HCT116 (cell line): ENCODE measurements at regions of chr10 and their contacts with region 1.

Region 1: DNA sequence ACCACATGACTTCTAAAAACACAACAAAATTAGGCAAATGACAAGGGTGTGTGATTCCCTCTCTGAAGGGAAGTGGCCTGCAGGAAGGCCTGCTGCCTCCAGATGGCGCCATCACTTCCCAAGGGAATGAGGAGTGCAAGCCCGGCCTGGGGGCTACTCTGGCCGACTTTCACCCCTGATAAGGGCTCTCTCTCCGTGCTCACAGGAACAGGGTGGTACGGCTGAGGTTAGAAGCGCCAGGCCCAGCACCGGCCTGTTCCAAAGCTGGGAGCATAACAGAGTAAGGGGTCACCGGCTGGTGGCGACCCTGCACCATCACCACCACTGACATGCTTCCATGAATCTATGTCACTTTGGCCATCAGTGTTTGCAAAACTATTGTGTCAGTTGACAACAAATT is 13.1 kb downstream of the RBP3 start:
- DNase-seq: peak; percentile 36
- ATAC-seq: peak; percentile 91
- H3K4me3 ChIP-seq: no peak overlapping the region
- H3K27ac ChIP-seq: no peak overlapping the region
- H3K4me1 ChIP-seq: peaks cover 0 to 18% of the 10 kb centered on the region in 2 experiments; a peak in 1 of 4 replicates
- H3K27me3 ChIP-seq: no peaks in the 10 kb centered on the region
- CTCF ChIP-seq: peak; percentile 76 to 99 (median 98); a peak in 5 of 6 replicates
- POLR2A ChIP-seq: no peak
- RAD21 ChIP-seq: peak; percentile 81

Region 2: DNA sequence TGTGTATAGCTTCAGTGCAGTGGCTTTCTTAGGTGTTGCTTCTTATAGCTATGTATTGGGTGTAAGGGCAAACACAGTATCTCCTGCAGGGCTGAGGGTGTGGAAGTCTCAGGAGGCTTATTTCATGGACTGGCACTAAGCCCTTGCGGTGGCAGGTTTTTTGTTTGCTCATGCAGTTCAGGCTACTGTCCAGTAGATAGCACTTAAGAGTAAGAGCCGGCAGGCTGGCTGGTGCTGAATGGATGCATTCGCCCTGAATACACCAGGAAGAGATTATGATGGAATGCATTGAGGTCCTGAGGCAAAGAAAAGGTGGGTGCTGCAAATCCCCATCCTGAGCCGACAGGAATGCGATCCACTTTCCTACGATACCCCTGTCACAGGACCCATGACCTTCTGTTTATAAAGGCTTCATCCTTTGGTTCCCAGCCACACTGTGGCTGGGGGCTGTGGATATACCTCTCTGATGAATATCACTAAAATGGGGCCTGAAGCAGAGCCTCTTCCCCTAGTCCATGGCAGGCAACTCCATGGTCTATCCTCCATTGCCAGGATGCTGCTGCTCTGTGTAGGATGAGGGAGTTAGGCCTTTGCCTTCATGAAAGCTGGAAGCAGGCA is 77.7 kb after region 1 on chr10:
- CTCF ChIA-PET with region 1: no interaction called
- POLR2A ChIA-PET with region 1: no interaction called
- RAD21 ChIA-PET with region 1: no interaction called
- intact Hi-C with region 1: loop called (anchors 5 kb)
- DNase-seq: peak; percentile 62
- ATAC-seq: peak; percentile 99
- H3K4me3 ChIP-seq: no peak overlapping the region
- H3K27ac ChIP-seq: no peak overlapping the region
- H3K4me1 ChIP-seq: peaks cover 3 to 5% of the 10 kb centered on the region in 2 experiments; a peak in 3 of 4 replicates
- H3K27me3 ChIP-seq: no peaks in the 10 kb centered on the region
- CTCF ChIP-seq: peak; percentile 64 to 74 (median 70)
- POLR2A ChIP-seq: no peak
- RAD21 ChIP-seq: peak; percentile 67

Region 3: GRCh38 chr10:47458466-47459154 is 97.3 kb after region 1 on chr10:
- CTCF ChIA-PET with region 1: no interaction called
- POLR2A ChIA-PET with region 1: no interaction called
- RAD21 ChIA-PET with region 1: no interaction called
- intact Hi-C with region 1: no loop called
- DNase-seq: no peak
- ATAC-seq: no peak
- H3K4me3 ChIP-seq: no peak overlapping the region
- H3K27ac ChIP-seq: no peak overlapping the region
- H3K4me1 ChIP-seq: peaks cover 3 to 23% of the 10 kb centered on the region in 2 experiments
- H3K27me3 ChIP-seq: no peaks in the 10 kb centered on the region
- CTCF ChIP-seq: no peak
- POLR2A ChIP-seq: no peak
- RAD21 ChIP-seq: no peak